WTC11 (cell line): ENCODE measurements at regions of chr13 and their contacts with region 1.

Region 1: DNA sequence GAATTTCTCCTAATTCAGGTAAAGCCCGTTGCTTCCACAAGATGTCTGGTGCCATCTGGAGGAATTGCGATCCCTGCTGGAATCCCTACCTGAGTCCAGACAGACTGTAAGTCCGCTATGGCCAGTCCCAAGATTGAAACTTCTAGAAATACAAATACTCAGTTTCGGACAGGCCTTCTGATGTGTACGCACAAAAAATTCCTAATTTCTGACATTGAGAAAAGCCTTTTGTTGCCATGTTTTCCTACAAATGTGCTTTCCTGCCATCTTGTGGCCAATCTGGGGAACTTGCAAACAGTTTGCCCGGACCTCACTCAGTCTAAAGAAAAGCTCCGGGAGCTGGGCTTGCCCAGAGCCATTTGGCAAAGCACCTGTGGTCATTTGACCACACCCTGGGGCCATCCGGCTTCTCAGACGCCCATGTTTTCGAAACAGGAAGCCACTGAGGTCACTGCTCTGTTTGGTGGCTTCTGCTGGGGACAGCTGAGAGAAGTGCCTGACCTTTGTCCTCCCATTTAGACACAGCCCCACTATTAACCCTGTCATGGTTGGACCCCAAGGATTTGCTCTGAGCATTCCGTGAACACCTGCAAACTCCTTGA is 79.4 kb downstream of the SLC15A1 start:
- DNase-seq: peak; percentile 68
- ATAC-seq: peak; percentile 80
- H3K4me3 Mint-ChIP-seq: no peak overlapping the region
- H3K27ac Mint-ChIP-seq: no peak overlapping the region
- H3K4me1 Mint-ChIP-seq: peaks cover 34% of the 10 kb centered on the region
- H3K27me3 Mint-ChIP-seq: peaks cover 3% of the 10 kb centered on the region; the same call in 1 of the 2 replicates
- CTCF ChIP-seq: peak; percentile 76

Region 2: DNA sequence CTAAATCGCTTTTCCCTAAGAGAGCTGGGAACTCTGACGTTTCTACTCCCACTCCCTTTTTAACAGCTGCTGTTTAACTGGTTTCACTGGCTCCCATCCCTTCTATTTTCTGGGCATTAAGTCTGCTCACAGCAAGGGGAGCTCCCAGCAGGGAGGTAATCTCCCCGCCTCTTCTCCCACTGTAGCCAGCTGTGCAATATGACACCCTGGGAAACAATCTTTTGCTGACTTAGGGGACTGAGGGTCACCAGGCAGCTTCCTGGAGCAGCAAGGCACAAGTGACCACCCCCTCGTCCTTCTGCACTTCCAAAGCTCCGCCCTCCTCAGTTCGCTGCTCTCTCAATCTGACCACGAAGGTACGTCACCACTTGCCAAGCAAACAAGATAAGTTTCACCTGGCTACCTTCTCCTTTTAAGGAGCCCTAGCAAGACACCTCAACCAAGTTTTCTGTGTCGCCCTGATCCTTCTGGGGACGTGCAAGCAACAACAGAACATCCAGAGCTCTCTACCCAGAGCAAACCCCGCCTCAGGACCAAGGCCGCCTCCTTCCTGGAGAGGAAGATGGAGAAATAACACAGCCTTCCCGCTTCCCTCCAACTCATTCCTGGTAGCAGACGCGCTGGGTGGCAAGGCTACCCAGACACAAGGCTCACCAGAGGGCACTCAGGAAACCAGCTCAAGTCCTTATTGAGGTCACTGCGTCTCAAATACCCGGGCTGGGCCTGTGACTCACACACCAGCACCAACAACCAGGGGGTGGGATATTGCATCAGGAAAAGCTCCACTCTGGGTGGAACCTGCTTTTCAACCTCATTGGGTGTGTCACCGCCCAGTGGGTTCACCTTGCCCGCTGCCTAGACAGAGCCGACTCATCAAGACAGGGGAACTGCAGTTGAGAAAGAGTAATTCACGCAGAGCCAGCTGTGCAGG is 188.5 kb before region 1 on chr13:
- CTCF ChIA-PET with region 1: interaction called, 21 read pairs
- POLR2A ChIA-PET with region 1: no interaction called
- DNase-seq: peak; percentile 71
- ATAC-seq: peak; percentile 80
- H3K4me3 Mint-ChIP-seq: peak overlapping the region; percentile 50
- H3K27ac Mint-ChIP-seq: peak overlapping the region; percentile 93
- H3K4me1 Mint-ChIP-seq: peaks cover 89% of the 10 kb centered on the region
- H3K27me3 Mint-ChIP-seq: no peaks in the 10 kb centered on the region
- CTCF ChIP-seq: no peak

Region 3: DNA sequence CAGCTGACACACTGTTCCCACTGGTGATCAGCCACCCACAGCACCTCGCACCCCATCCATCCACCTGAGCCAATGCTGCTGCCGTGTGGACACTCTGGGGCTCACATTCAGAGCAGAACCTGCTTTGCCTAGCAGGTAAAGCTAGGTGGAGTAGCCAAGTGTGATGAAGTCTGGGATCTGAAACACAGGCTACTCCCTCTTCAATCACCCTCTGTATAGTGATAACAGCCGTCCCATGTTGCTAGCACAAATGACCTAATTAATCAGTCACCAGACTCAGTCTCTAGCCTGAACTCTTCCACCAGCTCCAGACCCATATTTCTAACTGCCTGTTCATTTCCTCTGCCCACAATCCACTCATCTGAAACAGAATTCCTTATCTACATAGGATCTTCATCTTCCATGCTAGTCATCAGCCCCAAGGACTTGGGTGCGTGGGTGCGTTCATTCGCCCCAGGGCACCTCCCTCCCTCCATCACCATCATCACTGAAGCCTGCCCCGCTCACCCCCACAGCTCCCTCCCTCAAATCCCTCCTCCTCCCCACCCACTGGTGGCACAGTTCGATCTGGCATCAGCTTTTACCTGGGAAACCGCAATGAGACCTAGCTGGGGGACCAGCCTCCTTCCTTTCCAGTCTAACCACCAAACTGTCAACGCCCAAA is 115.9 kb before region 1 on chr13:
- CTCF ChIA-PET with region 1: interaction called, 11 read pairs
- POLR2A ChIA-PET with region 1: no interaction called
- DNase-seq: no peak
- ATAC-seq: peak; percentile 46
- H3K4me3 Mint-ChIP-seq: no peak overlapping the region
- H3K27ac Mint-ChIP-seq: peak overlapping the region; percentile 29; the same call in 1 of the 2 replicates
- H3K4me1 Mint-ChIP-seq: peaks cover 71% of the 10 kb centered on the region
- H3K27me3 Mint-ChIP-seq: no peaks in the 10 kb centered on the region
- CTCF ChIP-seq: no peak

Region 4: GRCh38 chr13:98659476-98659875 is 13.6 kb before region 1 on chr13:
- CTCF ChIA-PET with region 1: interaction called, 26 read pairs
- POLR2A ChIA-PET with region 1: no interaction called
- DNase-seq: no peak
- ATAC-seq: no peak
- H3K4me3 Mint-ChIP-seq: no peak overlapping the region
- H3K27ac Mint-ChIP-seq: no peak overlapping the region
- H3K4me1 Mint-ChIP-seq: 0 out of 2 replicates have a peak, but pooled peaks cover 4% of the 10 kb centered on the region
- H3K27me3 Mint-ChIP-seq: no peaks in the 10 kb centered on the region; the same call in 1 of the 2 replicates
- CTCF ChIP-seq: no peak

Region 5: GRCh38 chr13:98693756-98694155 is 20.7 kb after region 1 on chr13:
- CTCF ChIA-PET with region 1: interaction called, 20 read pairs
- POLR2A ChIA-PET with region 1: no interaction called
- DNase-seq: no peak
- ATAC-seq: no peak
- H3K4me3 Mint-ChIP-seq: no peak overlapping the region
- H3K27ac Mint-ChIP-seq: no peak overlapping the region
- H3K4me1 Mint-ChIP-seq: peaks cover 18% of the 10 kb centered on the region
- H3K27me3 Mint-ChIP-seq: no peaks in the 10 kb centered on the region
- CTCF ChIP-seq: no peak

Region 6: GRCh38 chr13:98848746-98849145 is 175.7 kb after region 1 on chr13:
- CTCF ChIA-PET with region 1: no interaction called
- POLR2A ChIA-PET with region 1: no interaction called
- DNase-seq: no peak
- ATAC-seq: no peak
- H3K4me3 Mint-ChIP-seq: no peak overlapping the region
- H3K27ac Mint-ChIP-seq: no peak overlapping the region
- H3K4me1 Mint-ChIP-seq: peaks cover 9% of the 10 kb centered on the region
- H3K27me3 Mint-ChIP-seq: no peaks in the 10 kb centered on the region
- CTCF ChIP-seq: no peak

Region 7: DNA sequence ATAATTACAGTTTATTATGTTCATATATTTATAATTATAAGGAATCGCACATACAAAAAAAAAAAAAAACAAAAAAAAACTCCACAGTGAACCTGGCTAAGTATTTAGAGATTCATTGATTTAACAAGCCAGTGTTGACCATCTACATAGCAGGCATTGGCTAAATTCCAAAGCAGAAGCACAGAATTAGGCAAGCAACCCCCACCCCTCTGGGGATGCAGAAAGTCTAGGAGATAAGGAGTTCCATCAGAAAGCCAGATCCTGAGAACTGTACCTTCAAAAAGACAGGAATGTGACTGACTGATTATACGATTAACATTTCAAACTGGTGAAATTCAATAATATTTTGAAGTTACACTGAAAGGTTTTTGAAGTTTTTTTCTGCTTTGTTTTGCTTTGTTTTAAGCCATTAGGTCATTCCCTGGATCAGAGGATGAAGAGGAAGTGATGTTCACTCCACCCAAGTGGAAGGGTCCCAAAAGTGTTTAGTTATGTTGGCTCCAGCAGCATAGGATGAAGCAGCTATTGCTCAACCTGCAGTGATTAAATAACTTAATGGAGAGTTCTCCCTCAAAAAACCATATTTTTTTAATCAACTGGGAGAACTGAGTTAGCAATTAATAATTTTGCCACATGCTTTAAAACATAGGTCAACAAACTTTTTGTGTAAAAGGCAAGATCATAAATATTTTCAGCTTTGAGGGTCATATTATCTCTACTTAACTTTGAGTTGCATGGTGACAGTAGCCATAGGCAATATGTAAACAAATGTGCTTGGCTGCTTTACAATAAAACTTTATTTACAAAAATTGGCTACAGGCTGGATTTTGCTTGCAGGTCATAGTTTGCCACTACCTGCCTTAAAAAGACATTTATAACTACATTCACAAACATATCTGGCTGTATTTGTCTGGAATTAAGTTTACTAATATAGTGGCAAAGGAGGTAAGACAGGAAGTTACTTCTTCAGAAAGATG is 255.2 kb after region 1 on chr13:
- CTCF ChIA-PET with region 1: no interaction called
- POLR2A ChIA-PET with region 1: no interaction called
- DNase-seq: no peak
- ATAC-seq: peak; percentile 78
- H3K4me3 Mint-ChIP-seq: no peak overlapping the region
- H3K27ac Mint-ChIP-seq: peak overlapping the region; percentile 3
- H3K4me1 Mint-ChIP-seq: peaks cover 35% of the 10 kb centered on the region
- H3K27me3 Mint-ChIP-seq: no peaks in the 10 kb centered on the region
- CTCF ChIP-seq: no peak